ENCODE measurements at regions of chr19 and their contacts with region 1.

Region 1: GRCh38 chr19:46346821-46347571 is at the start of gene PPP5C:
- DNase-seq: peak; percentile 82 to 92
- ATAC-seq: peak; percentile 88 to 89
- H3K4me3 ChIP-seq: peak within 1 kb of the TSS; percentile 98 to 100 (median 100)
- H3K27ac ChIP-seq: peak within 1 kb of the TSS; percentile 90 to 97 (median 90)
- H3K4me1 ChIP-seq: peaks cover 41 to 45% of the 10 kb centered on the region in 2 donors
- H3K27me3 ChIP-seq: no peaks in the 10 kb centered on the region
- CTCF ChIP-seq: peak; percentile 56 to 82 (median 67)
- POLR2A ChIP-seq: peak; percentile 61 to 75
- total RNA-seq, gene PPP5C: 47.4 to 74.9 (median 62.8) TPM

Region 2: DNA sequence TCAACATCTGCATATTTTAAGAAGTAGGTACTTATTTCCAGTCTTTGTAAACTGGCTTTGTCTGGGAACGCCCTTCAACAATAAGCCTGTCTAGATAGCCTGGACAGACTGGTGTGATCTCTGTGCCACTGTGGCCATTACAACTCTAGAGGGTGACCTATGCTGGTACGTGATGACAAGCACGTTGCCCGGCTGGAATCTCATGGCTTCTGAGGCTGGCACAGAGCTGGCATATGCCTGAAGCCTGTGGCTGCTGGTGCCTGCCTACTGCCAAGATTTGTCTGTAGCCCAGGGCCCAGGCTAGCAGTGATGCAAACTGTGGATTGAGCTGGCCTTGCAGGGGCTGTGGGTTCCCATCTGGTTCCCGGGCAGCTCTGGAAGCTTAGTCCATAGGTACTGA is 256.6 kb before region 1 on chr19:
- in situ Hi-C with region 1: no loop called
- intact Hi-C with region 1: no loop called
- DNase-seq: no peak
- ATAC-seq: no peak
- H3K4me3 ChIP-seq: no peak overlapping the region
- H3K27ac ChIP-seq: no peak overlapping the region
- H3K4me1 ChIP-seq: no peaks in the 10 kb centered on the region
- H3K27me3 ChIP-seq: peaks cover 0 to 12% (median 8%) of the 10 kb centered on the region in 3 donors
- CTCF ChIP-seq: no peak
- POLR2A ChIP-seq: no peak

Region 3: GRCh38 chr19:46299004-46299509 is 47.9 kb before region 1 on chr19:
- in situ Hi-C with region 1: no loop called
- intact Hi-C with region 1: loop called (anchors 2 kb)
- DNase-seq: peak; percentile 77
- ATAC-seq: peak; percentile 50 to 57
- H3K4me3 ChIP-seq: peak overlapping the region; percentile 54 to 63 (median 60)
- H3K27ac ChIP-seq: peak overlapping the region; percentile 77 to 89 (median 84)
- H3K4me1 ChIP-seq: peaks cover 14 to 17% of the 10 kb centered on the region in 2 donors
- H3K27me3 ChIP-seq: peaks cover 8 to 22% (median 21%) of the 10 kb centered on the region in 3 donors
- CTCF ChIP-seq: no peak
- POLR2A ChIP-seq: no peak

Region 4: DNA sequence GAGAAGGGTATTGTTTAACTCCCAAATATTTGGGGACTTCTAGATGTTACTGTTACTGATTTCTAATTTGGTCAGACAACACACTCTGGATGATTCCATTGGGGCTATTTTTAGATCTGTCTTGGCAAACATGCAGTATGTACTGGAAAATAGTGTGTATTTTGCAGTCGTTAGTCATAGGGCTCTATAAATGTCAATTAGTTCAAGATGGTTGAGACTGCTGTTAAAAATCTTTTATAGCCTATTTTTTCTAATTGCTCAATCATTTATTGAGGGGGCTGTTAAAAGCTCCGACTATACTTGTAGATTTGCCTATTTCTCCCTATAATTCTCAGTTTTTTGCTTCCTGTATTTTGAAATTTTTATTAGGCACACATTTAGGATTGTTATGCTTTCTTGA is 31.3 kb after region 1 on chr19:
- in situ Hi-C with region 1: no loop called
- intact Hi-C with region 1: loop called (anchors 2 kb)
- DNase-seq: no peak
- ATAC-seq: peak; percentile 90 to 97
- H3K4me3 ChIP-seq: no peak overlapping the region
- H3K27ac ChIP-seq: peak overlapping the region; percentile 70 to 75 (median 72)
- H3K4me1 ChIP-seq: peaks cover 45 to 48% of the 10 kb centered on the region in 2 donors
- H3K27me3 ChIP-seq: no peaks in the 10 kb centered on the region
- CTCF ChIP-seq: no peak
- POLR2A ChIP-seq: no peak

Region 5: GRCh38 chr19:46495787-46496101 is 148.7 kb after region 1 on chr19 and contains the start of gene PNMA8B:
- in situ Hi-C with region 1: no loop called
- intact Hi-C with region 1: no loop called
- DNase-seq: no peak
- ATAC-seq: no peak
- H3K4me3 ChIP-seq: peak within 1 kb of the TSS in 2 of 4 donors; percentile 20 to 24
- H3K27ac ChIP-seq: no peak within 1 kb of the TSS
- H3K4me1 ChIP-seq: no peaks in the 10 kb centered on the region
- H3K27me3 ChIP-seq: peaks cover 19 to 29% (median 20%) of the 10 kb centered on the region in 3 donors
- CTCF ChIP-seq: no peak
- POLR2A ChIP-seq: no peak
- total RNA-seq, gene PNMA8B: 0.07 to 0.18 (median 0.15) TPM

Region 6: GRCh38 chr19:46513461-46514236 is 166.7 kb after region 1 on chr19:
- in situ Hi-C with region 1: no loop called
- intact Hi-C with region 1: no loop called
- DNase-seq: peak; percentile 34 to 40
- ATAC-seq: peak; percentile 47 to 73
- H3K4me3 ChIP-seq: no peak overlapping the region
- H3K27ac ChIP-seq: no peak overlapping the region
- H3K4me1 ChIP-seq: peaks cover 0 to 3% of the 10 kb centered on the region in 2 donors
- H3K27me3 ChIP-seq: peaks cover 3 to 10% (median 7%) of the 10 kb centered on the region in 3 donors
- CTCF ChIP-seq: peak; percentile 66 to 88 (median 85)
- POLR2A ChIP-seq: no peak

Measured in gastrocnemius medialis (tissue), 4 donors.